GM10248 (cell line): ENCODE measurements at regions of chr7 and their contacts with region 1.

Region 1: GRCh38 chr7:129376076-129376777 is 58.0 kb upstream of the STRIP2 start:
- DNase-seq: peak; percentile 45
- CTCF ChIP-seq: peak; percentile 83

Region 2: DNA sequence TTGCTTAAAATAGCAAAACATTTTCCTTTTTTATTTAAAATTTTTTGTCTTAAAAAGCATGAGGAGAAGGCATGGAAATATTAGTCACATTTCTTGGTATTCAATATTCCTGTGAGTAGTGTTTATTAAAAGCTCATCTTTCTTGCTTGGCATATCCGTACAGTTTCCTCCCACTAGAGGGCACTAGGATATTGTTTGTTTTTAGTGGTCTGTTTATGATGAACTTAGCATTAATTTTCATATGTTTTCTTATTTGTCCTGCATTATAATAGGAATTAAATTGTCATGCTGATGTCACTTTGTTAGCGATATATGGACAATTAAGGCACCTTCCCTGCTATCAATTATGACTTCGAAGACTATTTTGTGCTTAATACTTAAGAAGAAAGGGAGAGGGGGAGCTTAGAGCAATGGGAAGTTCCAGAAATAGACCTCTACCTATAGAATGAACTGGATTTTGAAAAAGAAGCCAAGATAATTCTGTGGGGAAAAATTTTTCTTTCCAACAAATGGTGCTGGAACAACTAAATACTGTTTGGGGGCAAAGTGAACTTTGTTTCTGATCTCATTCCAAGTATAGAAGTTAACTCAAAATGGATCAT is 33.0 kb before region 1 on chr7:
- CTCF ChIA-PET with region 1: interaction called, 61 read pairs
- POLR2A ChIA-PET with region 1: no interaction called
- DNase-seq: peak; percentile 44
- CTCF ChIP-seq: peak; percentile 70

Region 3: GRCh38 chr7:129394982-129395914 is 19.0 kb after region 1 on chr7:
- CTCF ChIA-PET with region 1: interaction called, 59 read pairs
- POLR2A ChIA-PET with region 1: no interaction called
- DNase-seq: no peak
- CTCF ChIP-seq: no peak

Region 4: DNA sequence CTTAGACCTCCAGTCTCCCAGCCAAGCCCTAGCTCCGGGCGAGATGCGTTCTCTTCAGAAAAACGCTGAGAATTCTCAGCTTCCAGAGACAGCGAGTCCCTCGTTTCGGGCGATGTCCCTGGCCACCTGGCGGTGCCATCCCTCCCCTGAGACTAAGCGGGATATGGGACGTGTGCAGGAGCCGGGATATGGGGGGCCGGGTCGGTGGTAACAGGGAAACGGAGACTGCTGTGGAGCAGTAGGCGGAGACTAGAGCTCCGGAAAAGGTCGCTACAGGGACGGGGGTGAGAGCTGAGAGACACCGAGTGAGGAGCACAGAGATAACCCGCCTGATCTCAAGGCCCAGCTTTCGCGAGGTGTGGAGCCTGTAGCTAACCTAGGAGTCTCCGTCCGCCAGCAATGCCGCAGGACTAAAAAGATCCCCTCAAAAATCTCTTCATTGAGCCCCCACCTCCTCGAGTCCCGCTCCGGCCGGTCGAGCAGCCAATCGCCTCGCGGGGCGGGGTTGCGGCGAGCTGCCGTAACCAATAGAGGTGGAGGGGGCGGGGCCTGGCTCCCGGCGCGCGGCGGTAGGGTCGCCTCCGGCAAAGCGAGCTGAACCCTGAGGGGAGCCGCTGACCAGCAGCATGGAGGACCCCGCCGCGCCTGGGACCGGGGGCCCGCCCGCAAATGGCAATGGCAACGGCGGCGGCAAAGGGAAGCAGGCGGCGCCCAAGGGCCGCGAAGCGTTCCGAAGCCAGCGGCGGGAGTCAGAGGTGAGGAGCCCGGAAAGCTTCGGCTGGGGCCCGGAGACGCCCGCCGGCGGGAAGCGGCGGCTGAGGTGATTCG is 57.8 kb after region 1 on chr7 and contains the start of gene STRIP2:
- CTCF ChIA-PET with region 1: interaction called, 12 read pairs
- POLR2A ChIA-PET with region 1: no interaction called
- DNase-seq: peak; percentile 94
- CTCF ChIP-seq: no peak

Region 5: GRCh38 chr7:129468087-129468486 is 91.9 kb after region 1 on chr7:
- CTCF ChIA-PET with region 1: interaction called, 120 read pairs
- POLR2A ChIA-PET with region 1: no interaction called
- DNase-seq: no peak
- CTCF ChIP-seq: no peak